ENCODE measurements at regions of chr6 and their contacts with region 1.

Region 1: DNA sequence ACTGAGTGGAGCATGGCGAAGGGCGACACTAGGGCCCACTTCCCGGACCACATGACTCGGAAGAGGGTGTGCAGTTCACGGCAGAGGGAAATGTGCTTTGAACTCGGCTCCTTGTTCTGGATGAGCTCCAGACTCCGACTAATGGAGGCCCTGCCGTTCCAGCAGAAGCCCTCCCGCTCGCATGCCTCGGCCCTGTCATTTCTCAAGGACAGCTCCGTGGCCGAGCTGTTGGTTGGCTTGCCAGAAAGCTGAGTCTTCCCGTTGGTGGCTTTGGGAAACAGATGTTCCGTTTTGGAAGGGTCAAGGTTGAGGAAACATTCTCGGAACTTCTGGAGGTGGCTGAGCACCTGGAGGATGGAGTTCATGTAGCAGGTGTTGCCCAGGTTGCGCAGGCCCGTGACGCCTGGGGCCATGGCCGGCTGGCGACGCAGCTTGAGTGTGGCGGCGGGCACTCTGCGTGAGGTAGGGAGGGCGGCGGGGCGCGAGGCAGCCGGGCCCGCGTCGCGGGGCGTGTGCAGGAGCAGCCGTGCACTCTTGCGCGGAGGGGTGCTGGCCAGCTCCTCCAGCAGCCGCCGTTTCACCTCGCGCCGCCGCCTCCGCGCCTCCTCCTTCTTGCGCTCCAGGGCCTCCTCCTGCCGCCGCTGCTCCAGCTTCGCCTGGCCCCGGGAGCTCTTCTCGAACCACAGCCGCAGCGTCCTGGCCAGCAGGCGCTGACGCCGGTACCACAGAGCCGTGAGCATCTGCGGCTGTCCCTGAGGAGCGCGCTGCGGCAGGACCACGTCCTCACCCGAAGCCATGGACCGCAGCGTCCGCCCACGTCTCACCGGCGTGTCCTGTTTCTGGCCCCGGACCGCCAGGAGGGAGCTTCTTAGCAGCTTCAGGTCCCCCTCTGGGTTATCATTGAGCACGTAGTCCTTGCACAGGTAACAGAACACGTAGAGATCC is 18.6 kb downstream of the TOMM6 start:
- DNase-seq: no peak

Region 2: GRCh38 chr6:41836022-41836659 is 30.0 kb after region 1 on chr6:
- intact Hi-C with region 1: loop called in 1 of 2 experiments (anchors 2 kb)
- DNase-seq: no peak

Measured in posterior vena cava (tissue), 2 donors.